Aorta (tissue), 5 donors: ENCODE measurements at regions of chr4 and their contacts with region 1.

Region 1: DNA sequence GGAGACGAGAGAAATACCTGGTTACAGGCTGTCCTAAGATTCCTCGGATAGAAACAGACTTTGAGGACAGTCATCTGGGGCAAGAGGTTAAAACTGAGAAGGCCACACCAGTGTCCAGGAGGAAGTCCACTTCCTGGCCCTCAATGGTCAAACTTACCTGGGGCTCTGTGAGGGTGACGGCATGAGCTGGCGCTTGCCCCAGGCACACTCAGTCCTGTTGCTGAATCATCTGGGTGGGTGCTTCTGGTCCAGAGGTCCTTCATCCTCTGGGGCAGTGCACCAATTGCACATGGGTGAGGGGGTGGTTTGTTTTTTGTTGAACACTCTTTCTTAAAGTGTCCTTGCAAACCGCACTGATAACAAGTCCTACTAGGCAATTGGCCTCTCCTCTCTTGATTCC is 7.1 kb upstream of the UGT2B11 start:
- DNase-seq: no peak
- ATAC-seq: no peak
- H3K4me3 ChIP-seq: no peak overlapping the region
- H3K27ac ChIP-seq: no peak overlapping the region
- H3K4me1 ChIP-seq: no peaks in the 10 kb centered on the region
- H3K27me3 ChIP-seq: no peaks in the 10 kb centered on the region

Region 2: GRCh38 chr4:69360271-69360670 is 138.6 kb after region 1 on chr4:
- intact Hi-C with region 1: no loop called
- DNase-seq: no peak
- ATAC-seq: no peak
- H3K4me3 ChIP-seq: no peak overlapping the region
- H3K27ac ChIP-seq: no peak overlapping the region
- H3K4me1 ChIP-seq: no peaks in the 10 kb centered on the region
- H3K27me3 ChIP-seq: no peaks in the 10 kb centered on the region

Region 3: GRCh38 chr4:69383281-69383680 is 161.6 kb after region 1 on chr4:
- intact Hi-C with region 1: loop called in 1 of 2 experiments (anchors 2 kb)
- DNase-seq: no peak
- ATAC-seq: peak; percentile 66
- H3K4me3 ChIP-seq: no peak overlapping the region
- H3K27ac ChIP-seq: no peak overlapping the region
- H3K4me1 ChIP-seq: no peaks in the 10 kb centered on the region
- H3K27me3 ChIP-seq: peaks cover 0 to 2% of the 10 kb centered on the region in 2 donors

Region 4: GRCh38 chr4:69781458-69782418 is 560.1 kb after region 1 on chr4:
- intact Hi-C with region 1: no loop called
- DNase-seq: no peak
- ATAC-seq: no peak
- H3K4me3 ChIP-seq: no peak overlapping the region
- H3K27ac ChIP-seq: no peak overlapping the region
- H3K4me1 ChIP-seq: no peaks in the 10 kb centered on the region
- H3K27me3 ChIP-seq: no peaks in the 10 kb centered on the region